ENCODE measurements at regions of chr11 and their contacts with region 1.

Region 1: GRCh38 chr11:132373405-132374143 is 1003.2 kb downstream of the NTM start:
- DNase-seq: no peak
- ATAC-seq: no peak
- H3K4me3 ChIP-seq: no peak overlapping the region
- H3K4me3 Mint-ChIP-seq: no peak overlapping the region
- H3K27ac ChIP-seq: no peak overlapping the region
- H3K27ac Mint-ChIP-seq: no peak overlapping the region
- H3K4me1 ChIP-seq: no peaks in the 10 kb centered on the region
- H3K4me1 Mint-ChIP-seq: no peaks in the 10 kb centered on the region
- H3K27me3 ChIP-seq: no peaks in the 10 kb centered on the region
- H3K27me3 Mint-ChIP-seq: no peaks in the 10 kb centered on the region
- CTCF ChIP-seq: no peak

Region 2: DNA sequence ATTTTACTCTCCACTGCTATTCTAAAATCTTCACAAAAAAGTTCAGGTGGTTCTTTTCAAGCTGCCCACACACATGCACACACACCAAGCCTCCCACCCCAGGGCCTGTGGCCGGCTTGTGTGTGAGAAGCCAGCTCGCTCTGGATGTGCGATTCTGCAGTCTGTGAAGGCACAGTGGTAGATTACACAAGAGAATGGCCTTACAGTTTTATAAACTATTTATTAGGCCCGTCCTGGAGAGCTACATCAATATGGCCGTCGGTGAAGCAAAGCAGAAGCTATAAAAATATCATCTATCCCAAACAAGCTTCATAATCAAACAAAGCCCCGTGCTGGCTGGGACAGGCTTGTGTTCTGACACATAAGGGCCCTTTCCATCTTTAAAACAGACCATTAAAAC is 918.2 kb after region 1 on chr11:
- CTCF ChIA-PET with region 1: no interaction called
- POLR2A ChIA-PET with region 1: no interaction called
- intact Hi-C with region 1: loop called in 1 of 2 experiments (anchors 5 kb)
- DNase-seq: no peak
- ATAC-seq: no peak
- H3K4me3 ChIP-seq: no peak overlapping the region
- H3K4me3 Mint-ChIP-seq: no peak overlapping the region
- H3K27ac ChIP-seq: no peak overlapping the region
- H3K27ac Mint-ChIP-seq: no peak overlapping the region
- H3K4me1 ChIP-seq: no peaks in the 10 kb centered on the region
- H3K4me1 Mint-ChIP-seq: no peaks in the 10 kb centered on the region
- H3K27me3 ChIP-seq: no peaks in the 10 kb centered on the region
- H3K27me3 Mint-ChIP-seq: no peaks in the 10 kb centered on the region
- CTCF ChIP-seq: no peak